ENCODE measurements at regions of chr5 and their contacts with region 1.

Region 1: GRCh38 chr5:42811591-42812446 is at the start of gene SELENOP:
- DNase-seq: peak; percentile 99
- ATAC-seq: peak; percentile 84
- H3K4me3 ChIP-seq: peak within 1 kb of the TSS; percentile 72 to 100 (median 84)
- H3K27ac ChIP-seq: peak within 1 kb of the TSS; percentile 96
- H3K4me1 ChIP-seq: peaks cover 52% of the 10 kb centered on the region
- H3K27me3 ChIP-seq: peaks cover 0 to 5% of the 10 kb centered on the region in 2 experiments; a peak in 1 of 5 replicates
- CTCF ChIP-seq: no peak
- EP300 ChIP-seq: peak; percentile 84 to 96
- POLR2A ChIP-seq: peak; percentile 98 to 100
- RAD21 ChIP-seq: no peak
- total RNA-seq, gene SELENOP: 1,596 and 1,895 TPM in 2 replicates

Region 2: GRCh38 chr5:42825422-42826148 is 13.8 kb after region 1 on chr5:
- CTCF ChIA-PET with region 1: no interaction called
- POLR2A ChIA-PET with region 1: interaction called, 93 read pairs
- in situ Hi-C with region 1: no loop called
- intact Hi-C with region 1: loop called (anchors 1 kb)
- DNase-seq: peak; percentile 41
- ATAC-seq: peak; percentile 20; the same call in 2 of the 3 replicates
- H3K4me3 ChIP-seq: peak overlapping the region; percentile 37 to 63 (median 56); a peak in 5 of 6 replicates
- H3K27ac ChIP-seq: peak overlapping the region; percentile 80
- H3K4me1 ChIP-seq: peaks cover 92% of the 10 kb centered on the region
- H3K27me3 ChIP-seq: no peaks in the 10 kb centered on the region
- CTCF ChIP-seq: no peak
- EP300 ChIP-seq: no peak
- POLR2A ChIP-seq: no peak; a peak in 1 of 4 replicates
- RAD21 ChIP-seq: no peak

Region 3: DNA sequence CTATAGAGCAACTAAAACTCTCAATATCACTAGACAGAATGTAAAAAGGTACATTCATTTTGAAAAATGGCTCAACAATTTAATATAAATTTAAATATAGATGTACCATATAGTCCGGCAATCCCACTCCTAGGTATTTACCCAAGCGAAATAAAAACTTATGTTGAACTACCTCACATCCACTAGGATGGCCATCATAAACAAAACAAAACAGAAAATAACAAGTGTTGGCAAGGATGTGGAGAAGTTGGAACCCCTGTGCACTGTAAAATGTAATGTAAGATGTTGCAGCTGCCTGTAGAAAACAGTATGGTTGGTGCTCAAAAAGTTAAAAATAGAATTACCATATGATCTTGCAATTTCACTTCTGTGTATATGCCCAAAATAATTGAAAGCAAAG is 36.7 kb after region 1 on chr5:
- CTCF ChIA-PET with region 1: no interaction called
- POLR2A ChIA-PET with region 1: interaction called, 20 read pairs
- in situ Hi-C with region 1: no loop called
- intact Hi-C with region 1: loop called (anchors 2 kb)
- DNase-seq: no peak
- ATAC-seq: no peak
- H3K4me3 ChIP-seq: no peak overlapping the region
- H3K27ac ChIP-seq: peak overlapping the region; percentile 88
- H3K4me1 ChIP-seq: peaks cover 69% of the 10 kb centered on the region
- H3K27me3 ChIP-seq: no peaks in the 10 kb centered on the region
- CTCF ChIP-seq: no peak
- EP300 ChIP-seq: no peak
- POLR2A ChIP-seq: no peak
- RAD21 ChIP-seq: no peak

Region 4: DNA sequence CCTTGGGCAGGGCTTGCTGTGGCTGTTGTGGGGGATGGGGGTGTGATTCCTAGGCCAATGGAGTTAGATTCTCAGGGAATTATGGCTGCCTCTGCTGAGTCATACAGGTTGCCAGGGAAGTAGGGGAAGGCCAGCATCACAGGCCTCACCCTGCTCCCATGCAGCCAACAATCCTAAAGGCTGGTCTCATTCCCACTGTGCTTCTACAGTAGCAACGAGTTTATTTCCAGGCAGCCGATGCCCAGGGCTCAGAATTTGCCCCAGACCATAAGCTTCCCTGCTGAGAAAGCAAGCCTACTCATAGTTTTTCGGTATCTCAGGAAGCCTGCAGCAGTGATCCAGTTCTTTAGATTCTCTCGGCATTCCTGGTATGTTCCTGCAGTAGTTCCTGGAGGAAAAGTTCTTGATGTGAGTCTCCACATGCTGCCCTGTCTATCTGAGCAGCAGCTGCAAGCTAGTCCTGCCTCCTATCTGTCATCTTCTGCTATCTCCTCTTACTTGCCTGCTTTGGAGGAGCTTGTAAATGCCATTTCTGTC is 59.1 kb after region 1 on chr5:
- CTCF ChIA-PET with region 1: no interaction called
- POLR2A ChIA-PET with region 1: interaction called, 263 read pairs
- in situ Hi-C with region 1: no loop called
- intact Hi-C with region 1: loop called (anchors 1 kb)
- DNase-seq: no peak
- ATAC-seq: peak; percentile 8; the same call in 2 of the 3 replicates
- H3K4me3 ChIP-seq: no peak overlapping the region
- H3K27ac ChIP-seq: peak overlapping the region; percentile 28
- H3K4me1 ChIP-seq: peaks cover 66% of the 10 kb centered on the region
- H3K27me3 ChIP-seq: no peaks in the 10 kb centered on the region
- CTCF ChIP-seq: peak; percentile 37; the same call in 1 of the 2 replicates
- EP300 ChIP-seq: no peak
- POLR2A ChIP-seq: no peak
- RAD21 ChIP-seq: no peak

Region 5: DNA sequence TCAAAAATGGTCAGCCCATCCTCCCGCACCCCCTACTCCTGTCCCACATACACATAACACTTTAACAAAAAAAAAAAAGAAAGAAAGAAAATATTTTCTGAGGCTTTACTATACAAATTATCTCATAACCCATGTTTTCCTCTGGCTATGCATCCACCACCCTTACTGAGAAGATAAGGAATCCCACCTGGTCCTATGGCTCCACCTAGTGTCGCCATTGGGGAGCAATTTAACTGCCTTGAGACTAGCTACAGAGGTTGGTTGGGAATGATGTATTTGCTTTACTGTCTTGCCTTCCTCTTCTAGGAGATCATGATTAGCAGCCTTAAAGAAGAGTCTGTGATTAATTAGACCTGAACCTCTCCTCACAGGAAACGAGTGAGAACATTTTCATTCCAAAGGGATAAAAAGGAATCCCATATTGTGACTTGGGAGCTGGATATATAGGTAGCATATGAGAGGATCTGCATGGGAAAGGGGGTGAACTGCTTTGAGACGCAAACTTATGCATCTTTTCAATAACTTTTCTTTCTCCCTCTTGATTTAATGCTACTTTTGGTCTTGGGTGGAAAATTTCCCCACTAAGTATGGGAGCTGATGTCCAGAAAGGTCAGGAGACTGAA is 77.6 kb after region 1 on chr5:
- CTCF ChIA-PET with region 1: interaction called, 6 read pairs
- POLR2A ChIA-PET with region 1: interaction called, 16 read pairs
- in situ Hi-C with region 1: loop called (anchors 10 kb)
- intact Hi-C with region 1: loop called (anchors 1 kb)
- DNase-seq: peak; percentile 82
- ATAC-seq: peak; percentile 95
- H3K4me3 ChIP-seq: no peak overlapping the region
- H3K27ac ChIP-seq: no peak overlapping the region
- H3K4me1 ChIP-seq: peaks cover 49% of the 10 kb centered on the region
- H3K27me3 ChIP-seq: no peaks in the 10 kb centered on the region
- CTCF ChIP-seq: peak; percentile 91
- EP300 ChIP-seq: no peak
- POLR2A ChIP-seq: no peak
- RAD21 ChIP-seq: peak; percentile 83

Region 6: GRCh38 chr5:43019614-43020293 is 207.9 kb after region 1 on chr5:
- CTCF ChIA-PET with region 1: no interaction called
- POLR2A ChIA-PET with region 1: interaction called, 3 read pairs
- in situ Hi-C with region 1: loop called (anchors 25 kb)
- intact Hi-C with region 1: loop called (anchors 10 kb)
- DNase-seq: peak; percentile 88
- ATAC-seq: peak; percentile 83
- H3K4me3 ChIP-seq: peak overlapping the region; percentile 69 to 86 (median 82)
- H3K27ac ChIP-seq: peak overlapping the region; percentile 92
- H3K4me1 ChIP-seq: peaks cover 39% of the 10 kb centered on the region
- H3K27me3 ChIP-seq: no peaks in the 10 kb centered on the region; a peak in 1 of 5 replicates
- CTCF ChIP-seq: peak; percentile 44
- EP300 ChIP-seq: no peak
- POLR2A ChIP-seq: no peak
- RAD21 ChIP-seq: no peak